Vagina (tissue), 2 donors: ENCODE measurements at regions of chr3 and their contacts with region 1.

Region 1: GRCh38 chr3:9422712-9423424 is 25.5 kb downstream of the SETD5 start:
- DNase-seq: peak in 1 of 2 donors; percentile 90
- H3K4me3 ChIP-seq: no peak overlapping the region
- H3K27ac ChIP-seq: peak overlapping the region; percentile 70
- H3K4me1 ChIP-seq: peaks cover 78% of the 10 kb centered on the region
- H3K27me3 ChIP-seq: no peaks in the 10 kb centered on the region
- CTCF ChIP-seq: peak; percentile 25 to 45 (median 35)
- POLR2A ChIP-seq: no peak

Region 2: GRCh38 chr3:9362731-9363530 is 59.9 kb before region 1 on chr3 and contains the start of gene THUMPD3:
- intact Hi-C with region 1: loop called (anchors 10 kb)
- DNase-seq: peak in 1 of 2 donors; percentile 89
- H3K4me3 ChIP-seq: peak within 1 kb of the TSS; percentile 63 to 86
- H3K27ac ChIP-seq: peak within 1 kb of the TSS; percentile 86
- H3K4me1 ChIP-seq: peaks cover 22% of the 10 kb centered on the region
- H3K27me3 ChIP-seq: no peaks in the 10 kb centered on the region
- CTCF ChIP-seq: no peak
- POLR2A ChIP-seq: peak in 1 of 2 donors; percentile 27
- total RNA-seq, gene THUMPD3: 25.5 TPM